Motor neuron (in vitro differentiated cells): ENCODE measurements at regions of chr3 and their contacts with region 1.

Region 1: GRCh38 chr3:116083686-116084085 is 361.6 kb downstream of the LSAMP start:
- ATAC-seq: no peak
- H3K4me3 ChIP-seq: no peak overlapping the region
- H3K27ac ChIP-seq: no peak overlapping the region
- H3K4me1 ChIP-seq: peaks cover 0 to 15% of the 10 kb centered on the region in 2 donors

Region 2: DNA sequence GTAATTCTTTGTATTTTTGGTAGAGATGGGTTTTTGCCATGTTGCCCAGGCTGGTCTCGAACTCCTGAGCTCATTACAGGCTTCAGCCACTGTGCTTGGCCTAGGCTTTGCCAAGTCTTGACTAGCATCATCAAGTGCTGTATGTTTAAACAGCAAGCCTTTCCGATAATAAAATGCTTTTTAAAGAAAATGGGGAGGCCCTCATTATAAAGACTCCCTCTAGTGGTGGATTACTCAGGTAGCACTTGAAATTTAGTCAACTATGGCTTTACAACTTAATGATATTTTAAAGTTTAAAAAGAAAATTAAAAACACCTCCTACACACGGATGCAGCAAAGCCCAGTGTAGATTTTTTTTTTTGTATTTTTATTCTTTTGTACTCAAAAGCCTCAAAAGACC is 246.7 kb before region 1 on chr3:
- in situ Hi-C with region 1: loop called in 1 of 9 experiments (anchors 25 kb)
- ATAC-seq: no peak
- H3K4me3 ChIP-seq: no peak overlapping the region
- H3K27ac ChIP-seq: no peak overlapping the region
- H3K4me1 ChIP-seq: no peaks in the 10 kb centered on the region